PC-9 (cell line): ENCODE measurements at regions of chr22 and their contacts with region 1.

Region 1: GRCh38 chr22:40950962-40951794 is at the start of gene RBX1:
- DNase-seq: peak; percentile 91 to 98
- H3K4me3 ChIP-seq: peak within 1 kb of the TSS; percentile 83
- H3K27ac ChIP-seq: peak within 1 kb of the TSS; percentile 75
- H3K4me1 ChIP-seq: peaks cover 14% of the 10 kb centered on the region
- H3K27me3 ChIP-seq: no peaks in the 10 kb centered on the region
- CTCF ChIP-seq: no peak
- total RNA-seq, gene RBX1: 52.9 and 53.3 TPM in 2 replicates

Region 2: GRCh38 chr22:40387746-40388145 is 563.4 kb before region 1 on chr22:
- CTCF ChIA-PET with region 1: no interaction called
- POLR2A ChIA-PET with region 1: no interaction called
- intact Hi-C with region 1: no loop called
- DNase-seq: peak in 1 of 2 experiments; percentile 58
- H3K4me3 ChIP-seq: no peak overlapping the region
- H3K27ac ChIP-seq: peak overlapping the region; percentile 16; the same call in 1 of the 2 replicates
- H3K4me1 ChIP-seq: 0 out of 2 replicates have a peak, but pooled peaks cover 10% of the 10 kb centered on the region
- H3K27me3 ChIP-seq: no peaks in the 10 kb centered on the region
- CTCF ChIP-seq: no peak

Region 3: DNA sequence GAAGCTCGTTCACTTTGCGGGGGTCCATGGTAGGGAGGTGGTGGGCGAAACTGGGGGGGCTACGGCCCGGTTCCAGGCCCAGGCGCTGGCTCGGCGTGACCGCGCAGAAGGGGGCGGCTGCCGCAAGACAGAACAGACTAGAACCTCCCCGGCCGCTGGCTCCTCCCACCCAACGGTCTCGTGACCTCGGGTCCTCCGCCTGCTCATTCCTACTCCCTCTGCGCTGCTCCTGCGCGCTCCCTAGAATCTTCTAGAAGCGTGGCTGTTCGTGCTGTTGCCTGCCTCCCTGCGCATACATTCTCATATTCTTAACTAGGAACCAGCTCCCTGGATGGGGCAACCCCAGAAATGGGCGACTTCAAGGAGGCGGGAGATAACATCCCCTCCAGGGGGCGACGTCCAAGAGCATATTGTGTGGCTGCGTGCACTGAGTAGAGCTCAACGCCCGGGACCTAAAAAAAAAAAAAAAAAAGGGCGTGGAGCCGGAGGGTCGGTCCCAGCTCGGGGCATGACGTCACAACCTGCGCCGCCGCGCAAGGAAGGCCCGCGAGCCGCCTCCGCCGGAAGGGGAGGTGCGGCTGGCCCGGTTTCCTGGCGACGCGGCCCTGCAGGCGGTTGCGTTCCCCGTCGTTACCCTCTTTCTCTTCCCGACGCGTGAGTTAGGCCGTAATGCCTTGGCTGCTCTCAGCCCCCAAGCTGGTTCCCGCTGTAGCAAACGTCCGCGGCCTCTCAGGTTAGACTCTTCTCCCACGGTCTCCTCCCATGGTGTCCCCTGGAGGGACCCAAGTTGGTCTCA is 94.5 kb before region 1 on chr22 and contains the starts of genes ST13 and XPNPEP3:
- CTCF ChIA-PET with region 1: no interaction called
- POLR2A ChIA-PET with region 1: interaction called, 10 read pairs
- intact Hi-C with region 1: no loop called
- DNase-seq: peak; percentile 92 to 95
- H3K4me3 ChIP-seq: peak within 1 kb of the TSS; percentile 98
- H3K27ac ChIP-seq: peak within 1 kb of the TSS; percentile 88
- H3K4me1 ChIP-seq: peaks cover 43% of the 10 kb centered on the region
- H3K27me3 ChIP-seq: no peaks in the 10 kb centered on the region
- CTCF ChIP-seq: peak; percentile 53
- total RNA-seq, gene ST13: 285 and 303 TPM in 2 replicates
- total RNA-seq, gene XPNPEP3: 34.3 and 42.7 TPM in 2 replicates

Region 4: GRCh38 chr22:40922484-40923303 is 28.5 kb before region 1 on chr22:
- CTCF ChIA-PET with region 1: no interaction called
- POLR2A ChIA-PET with region 1: no interaction called
- intact Hi-C with region 1: no loop called
- DNase-seq: peak in 1 of 2 experiments; percentile 56
- H3K4me3 ChIP-seq: no peak overlapping the region
- H3K27ac ChIP-seq: no peak overlapping the region
- H3K4me1 ChIP-seq: no peaks in the 10 kb centered on the region
- H3K27me3 ChIP-seq: no peaks in the 10 kb centered on the region
- CTCF ChIP-seq: peak; percentile 89

Region 5: DNA sequence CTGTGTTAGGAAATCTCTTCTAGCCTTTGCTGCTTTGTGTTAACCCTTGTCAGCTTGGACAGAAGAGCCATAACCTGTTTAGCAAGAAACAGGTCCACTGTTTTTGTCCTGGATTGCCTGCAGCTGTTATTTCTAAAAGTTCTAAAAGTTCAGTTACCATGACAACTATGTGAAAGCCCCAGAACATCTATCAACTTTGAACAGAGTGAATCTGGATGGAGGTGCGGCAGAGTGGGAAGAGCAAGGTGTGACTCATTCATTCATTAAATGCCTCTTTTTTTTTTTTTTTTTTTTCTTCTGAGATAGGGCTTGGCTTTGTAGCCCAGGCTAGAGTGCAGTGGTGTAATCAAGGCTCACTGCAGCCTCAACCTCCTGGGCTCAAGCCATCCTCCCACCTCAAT is 50.5 kb after region 1 on chr22:
- CTCF ChIA-PET with region 1: interaction called, 10 read pairs
- POLR2A ChIA-PET with region 1: interaction called, 18 read pairs
- intact Hi-C with region 1: loop called (anchors 1 kb)
- DNase-seq: peak; percentile 65 to 100
- H3K4me3 ChIP-seq: peak overlapping the region; percentile 45; the same call in 1 of the 2 replicates
- H3K27ac ChIP-seq: peak overlapping the region; percentile 96
- H3K4me1 ChIP-seq: peaks cover 44% of the 10 kb centered on the region
- H3K27me3 ChIP-seq: no peaks in the 10 kb centered on the region
- CTCF ChIP-seq: no peak

Region 6: DNA sequence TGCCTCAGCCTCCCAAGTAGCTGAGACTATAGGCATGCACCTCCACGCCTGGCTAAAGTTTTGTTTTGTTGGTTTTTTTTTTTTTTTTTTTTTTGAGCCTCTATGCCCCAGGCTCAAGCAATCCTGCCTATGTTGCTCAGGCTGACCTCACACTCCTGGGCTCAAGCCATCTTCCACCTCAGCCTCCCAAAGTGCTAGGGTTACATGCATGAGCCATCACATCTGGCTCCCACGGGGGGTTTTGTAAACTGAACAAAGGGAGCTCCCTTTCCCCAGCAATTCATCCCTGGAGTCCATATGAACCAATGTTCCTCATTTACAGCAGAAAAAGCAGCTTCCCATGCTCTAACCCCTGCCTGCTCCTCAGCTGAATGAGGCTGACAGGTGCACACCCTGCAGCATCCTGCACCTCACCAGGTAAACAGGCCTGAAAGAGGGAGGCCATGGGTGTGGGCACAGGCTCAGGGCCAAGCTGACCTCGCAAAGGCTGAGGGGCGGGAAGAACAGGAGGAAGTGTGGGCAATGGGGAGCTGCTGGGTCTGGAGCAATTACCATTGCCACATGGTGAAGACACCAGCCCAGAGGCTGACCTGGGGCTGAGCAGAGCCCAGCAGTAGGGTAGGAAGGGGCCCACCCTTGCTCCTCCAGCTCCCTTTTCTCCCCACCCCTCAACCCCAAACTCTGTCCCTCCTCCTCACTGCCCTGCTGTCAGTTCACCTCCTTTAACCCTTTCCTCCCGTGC is 58.2 kb after region 1 on chr22:
- CTCF ChIA-PET with region 1: no interaction called
- POLR2A ChIA-PET with region 1: interaction called, 11 read pairs
- intact Hi-C with region 1: no loop called
- DNase-seq: peak; percentile 51 to 77
- H3K4me3 ChIP-seq: no peak overlapping the region
- H3K27ac ChIP-seq: peak overlapping the region; percentile 44
- H3K4me1 ChIP-seq: peaks cover 18% of the 10 kb centered on the region
- H3K27me3 ChIP-seq: no peaks in the 10 kb centered on the region
- CTCF ChIP-seq: no peak

Region 7: GRCh38 chr22:41091132-41092022 is 140.2 kb after region 1 on chr22:
- CTCF ChIA-PET with region 1: no interaction called
- POLR2A ChIA-PET with region 1: interaction called, 8 read pairs
- intact Hi-C with region 1: loop called (anchors 1 kb)
- DNase-seq: peak; percentile 93 to 98
- H3K4me3 ChIP-seq: peak overlapping the region; percentile 92
- H3K27ac ChIP-seq: peak overlapping the region; percentile 97
- H3K4me1 ChIP-seq: peaks cover 28% of the 10 kb centered on the region
- H3K27me3 ChIP-seq: no peaks in the 10 kb centered on the region
- CTCF ChIP-seq: no peak

Region 8: GRCh38 chr22:41327124-41327523 is 375.9 kb after region 1 on chr22:
- CTCF ChIA-PET with region 1: no interaction called
- POLR2A ChIA-PET with region 1: interaction called, 12 read pairs
- intact Hi-C with region 1: no loop called
- DNase-seq: no peak
- H3K4me3 ChIP-seq: no peak overlapping the region
- H3K27ac ChIP-seq: no peak overlapping the region
- H3K4me1 ChIP-seq: no peaks in the 10 kb centered on the region
- H3K27me3 ChIP-seq: no peaks in the 10 kb centered on the region
- CTCF ChIP-seq: no peak

Region 9: DNA sequence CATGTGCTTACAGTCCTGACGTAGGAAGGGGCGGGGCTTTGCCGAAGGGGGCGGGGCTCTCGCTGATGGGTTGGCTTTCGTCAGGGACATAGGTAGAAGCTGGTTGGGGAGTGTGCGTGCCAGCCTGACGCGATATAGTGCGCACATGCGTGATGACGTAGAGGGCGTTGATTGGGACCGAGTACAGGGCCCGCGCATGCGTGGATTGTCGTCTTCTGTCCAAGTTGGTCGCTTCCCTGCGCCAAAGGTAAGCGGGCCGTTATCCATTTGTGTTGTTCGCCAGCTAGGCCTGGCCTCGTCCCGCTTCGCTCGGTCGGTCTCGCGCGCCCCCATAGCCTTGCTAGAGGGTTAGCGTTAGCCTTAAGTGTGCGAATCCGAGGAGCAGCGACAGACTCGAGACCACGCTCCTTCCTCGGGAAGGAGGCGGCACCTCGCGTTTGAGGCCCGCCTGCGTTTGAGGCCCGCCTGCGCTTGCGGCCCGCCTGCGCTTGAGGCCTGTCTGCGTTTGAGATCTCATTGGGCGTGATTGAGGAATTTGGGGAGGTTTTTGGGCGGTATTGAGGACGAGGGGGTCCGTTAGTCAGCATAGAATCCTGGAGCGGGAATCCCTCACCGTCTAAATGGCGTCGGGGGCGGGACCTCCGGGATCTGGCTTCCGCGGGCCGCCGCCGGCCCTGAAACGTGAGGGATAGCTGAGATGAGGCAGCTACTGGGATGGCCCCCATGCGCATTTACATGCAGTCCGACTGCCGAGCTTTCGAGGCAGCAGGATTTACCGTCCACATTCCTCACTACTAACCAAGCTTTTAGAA is 670.1 kb after region 1 on chr22 and contains the start of gene XRCC6:
- CTCF ChIA-PET with region 1: no interaction called
- POLR2A ChIA-PET with region 1: no interaction called
- intact Hi-C with region 1: loop called (anchors 2 kb)
- DNase-seq: peak; percentile 99 to 100
- H3K4me3 ChIP-seq: peak within 1 kb of the TSS; percentile 90
- H3K27ac ChIP-seq: peak within 1 kb of the TSS; percentile 79
- H3K4me1 ChIP-seq: peaks cover 33% of the 10 kb centered on the region
- H3K27me3 ChIP-seq: no peaks in the 10 kb centered on the region
- CTCF ChIP-seq: no peak
- total RNA-seq, gene XRCC6: 386 and 486 TPM in 2 replicates